Common myeloid progenitor, CD34-positive (primary cell): ENCODE measurements at regions of chr17 and their contacts with region 1.

Region 1: DNA sequence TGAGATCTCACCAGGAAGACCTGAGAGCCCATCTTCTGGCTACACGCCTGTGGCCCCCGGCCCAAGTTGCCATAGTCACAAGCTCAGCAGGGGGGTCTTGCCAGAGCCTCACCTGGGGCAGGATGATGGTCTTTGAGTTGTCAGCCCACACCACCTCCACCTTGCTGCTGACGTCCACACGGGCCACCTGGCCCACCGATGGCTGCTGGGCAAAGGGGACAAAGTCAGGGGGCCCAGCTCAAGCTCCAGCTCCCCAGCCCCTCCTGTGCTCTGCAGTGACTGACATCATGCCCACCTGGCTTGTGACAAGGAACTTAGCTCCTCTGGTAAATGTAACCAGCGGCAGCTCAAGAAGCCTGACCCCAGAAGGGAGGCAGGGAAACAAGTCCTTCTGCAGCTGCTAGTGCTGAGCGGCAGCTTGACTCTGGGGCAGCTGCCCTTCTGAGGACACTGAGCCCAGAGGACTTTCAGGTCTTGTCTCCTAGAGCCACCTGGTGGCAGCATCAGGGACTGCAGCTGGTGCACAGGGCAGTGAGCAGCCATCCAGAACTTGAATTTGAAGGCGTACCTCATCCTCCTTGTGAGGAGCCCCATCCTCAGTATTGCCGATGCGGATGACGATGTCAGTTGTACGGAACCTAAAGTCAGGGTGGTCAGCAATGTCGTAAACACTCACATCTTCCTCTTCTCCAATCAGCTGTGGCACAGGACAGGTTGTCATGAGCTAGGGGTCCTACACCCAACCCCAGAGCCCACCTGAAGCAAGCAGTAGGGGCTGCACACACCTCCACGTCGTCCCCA is 13.5 kb downstream of the SPHK1 start:
- DNase-seq: peak; percentile 73 to 87 (median 79)
- H3K4me3 ChIP-seq: no peak overlapping the region
- H3K27ac ChIP-seq: no peak overlapping the region
- H3K4me1 ChIP-seq: no peaks in the 10 kb centered on the region
- H3K27me3 ChIP-seq: no peaks in the 10 kb centered on the region

Region 2: GRCh38 chr17:76219670-76220383 is 178.1 kb before region 1 on chr17:
- CTCF ChIA-PET with region 1: no interaction called
- POLR2A ChIA-PET with region 1: no interaction called
- DNase-seq: no peak
- H3K4me3 ChIP-seq: no peak overlapping the region
- H3K27ac ChIP-seq: no peak overlapping the region
- H3K4me1 ChIP-seq: no peaks in the 10 kb centered on the region
- H3K27me3 ChIP-seq: no peaks in the 10 kb centered on the region

Region 3: GRCh38 chr17:76296186-76296585 is 101.7 kb before region 1 on chr17:
- CTCF ChIA-PET with region 1: interaction called, 226 read pairs
- POLR2A ChIA-PET with region 1: no interaction called
- DNase-seq: no peak
- H3K4me3 ChIP-seq: no peak overlapping the region
- H3K27ac ChIP-seq: no peak overlapping the region
- H3K4me1 ChIP-seq: no peaks in the 10 kb centered on the region
- H3K27me3 ChIP-seq: no peaks in the 10 kb centered on the region

Region 4: DNA sequence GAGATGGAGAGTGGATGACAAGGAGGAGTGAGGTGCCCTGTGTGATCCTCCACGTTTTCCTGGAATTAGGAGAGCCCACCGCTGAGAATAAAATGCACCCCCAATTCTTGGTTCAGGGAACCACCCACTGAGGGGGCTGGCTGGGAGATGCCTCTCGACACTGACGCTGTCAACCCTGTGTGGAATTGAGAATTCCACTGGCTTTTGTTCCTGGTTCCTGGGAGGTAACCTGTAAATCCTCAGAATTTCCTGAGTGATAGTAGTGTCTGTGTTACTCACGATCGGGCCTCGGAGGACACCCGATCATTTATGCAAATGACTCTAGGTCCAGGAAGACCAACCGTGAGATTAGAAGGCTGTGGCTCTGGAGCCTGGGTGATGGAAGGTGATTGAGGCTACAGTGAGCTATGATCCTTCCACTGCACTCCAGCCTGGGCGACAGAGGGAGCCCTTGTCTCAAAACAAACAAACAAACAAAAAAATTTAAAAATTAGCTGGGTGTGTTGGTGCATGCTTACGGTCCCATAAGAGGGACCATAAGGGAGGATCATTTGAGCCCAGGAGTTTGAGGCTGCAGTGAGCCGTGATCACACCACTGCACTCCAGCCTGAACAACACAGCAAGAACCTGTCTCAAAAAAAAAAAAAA is 32.5 kb before region 1 on chr17:
- CTCF ChIA-PET with region 1: interaction called, 22 read pairs
- POLR2A ChIA-PET with region 1: no interaction called
- DNase-seq: peak in 1 of 3 donors; percentile 24
- H3K4me3 ChIP-seq: no peak overlapping the region
- H3K27ac ChIP-seq: no peak overlapping the region
- H3K4me1 ChIP-seq: no peaks in the 10 kb centered on the region
- H3K27me3 ChIP-seq: no peaks in the 10 kb centered on the region

Region 5: GRCh38 chr17:76384222-76384986 is 13.5 kb before region 1 on chr17 and contains the start of gene SPHK1:
- CTCF ChIA-PET with region 1: interaction called, 118 read pairs
- POLR2A ChIA-PET with region 1: no interaction called
- DNase-seq: peak in 2 of 3 donors; percentile 54 to 64
- H3K4me3 ChIP-seq: peak within 1 kb of the TSS; percentile 40 to 75 (median 60)
- H3K27ac ChIP-seq: peak within 1 kb of the TSS in 1 of 2 experiments; percentile 34
- H3K4me1 ChIP-seq: peaks cover 0 to 56% (median 51%) of the 10 kb centered on the region in 4 experiments
- H3K27me3 ChIP-seq: peaks cover 0 to 13% (median 0%) of the 10 kb centered on the region in 5 experiments

Region 6: GRCh38 chr17:76414334-76415295 is 16.7 kb after region 1 on chr17:
- CTCF ChIA-PET with region 1: interaction called, 48 read pairs
- POLR2A ChIA-PET with region 1: no interaction called
- DNase-seq: peak; percentile 72 to 90 (median 89)
- H3K4me3 ChIP-seq: no peak overlapping the region
- H3K27ac ChIP-seq: no peak overlapping the region
- H3K4me1 ChIP-seq: peaks cover 0 to 15% (median 13%) of the 10 kb centered on the region in 4 experiments
- H3K27me3 ChIP-seq: no peaks in the 10 kb centered on the region

Region 7: GRCh38 chr17:76481071-76481655 is 83.3 kb after region 1 on chr17:
- CTCF ChIA-PET with region 1: no interaction called
- POLR2A ChIA-PET with region 1: no interaction called
- DNase-seq: peak in 2 of 3 donors; percentile 35 to 46
- H3K4me3 ChIP-seq: peak overlapping the region in 4 of 7 experiments; percentile 11 to 47 (median 33)
- H3K27ac ChIP-seq: no peak overlapping the region
- H3K4me1 ChIP-seq: peaks cover 0 to 31% (median 18%) of the 10 kb centered on the region in 4 experiments
- H3K27me3 ChIP-seq: no peaks in the 10 kb centered on the region